Heart right ventricle (tissue), 16 donors: ENCODE measurements at regions of chr22 and their contacts with region 1.

Region 1: DNA sequence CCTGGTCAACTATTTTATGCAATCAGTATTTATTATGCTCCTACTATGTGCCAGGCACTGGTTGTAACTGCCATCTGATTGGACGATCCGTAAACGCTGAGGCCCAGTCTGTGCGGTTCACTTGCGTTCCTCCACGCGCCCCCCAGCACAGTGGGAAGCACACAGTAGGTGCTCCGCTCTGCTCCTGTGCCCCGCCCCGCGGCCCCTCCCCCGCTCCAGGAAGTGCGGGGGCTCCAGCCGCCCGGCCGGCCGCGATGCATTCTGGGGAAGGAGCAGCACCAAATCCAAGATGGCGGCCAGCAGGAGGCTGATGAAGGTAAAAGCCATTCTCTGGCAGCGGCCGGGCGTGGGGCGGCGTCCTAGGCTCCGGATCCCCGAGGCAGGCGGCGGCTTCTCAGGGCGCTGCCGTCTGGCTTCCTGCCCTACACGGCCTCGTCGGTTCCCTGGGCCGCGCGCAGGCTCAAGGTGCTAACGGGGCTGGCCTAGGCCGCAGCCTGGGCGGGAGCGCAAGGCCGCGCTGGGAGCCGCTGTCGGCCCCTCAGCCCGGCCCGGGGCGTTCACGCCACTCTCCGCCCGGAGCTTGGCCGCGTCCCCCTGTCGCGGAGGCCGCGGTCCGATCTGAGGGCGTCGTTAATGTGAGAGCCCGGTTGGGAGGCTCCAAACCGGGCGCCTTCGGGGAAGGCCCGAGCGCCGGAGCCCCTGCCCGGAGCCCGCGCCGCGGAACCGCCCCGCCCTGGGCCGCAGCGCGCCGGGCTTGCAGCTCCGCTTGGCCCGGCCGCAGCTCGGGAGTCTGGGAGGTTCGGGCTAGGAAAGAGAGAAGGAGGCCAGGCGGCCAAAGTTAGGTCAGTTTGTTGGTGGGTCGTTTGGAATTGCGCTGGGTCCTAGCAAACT is at the start of gene UBE2L3:
- DNase-seq: peak; percentile 86 to 88
- ATAC-seq: peak; percentile 94 to 97 (median 96)
- H3K4me3 ChIP-seq: peak within 1 kb of the TSS; percentile 67 to 96 (median 88)
- H3K27ac ChIP-seq: peak within 1 kb of the TSS; percentile 81 to 99 (median 94)
- H3K4me1 ChIP-seq: peaks cover 26 to 45% (median 40%) of the 10 kb centered on the region in 9 donors
- H3K27me3 ChIP-seq: no peaks in the 10 kb centered on the region
- CTCF ChIP-seq: no peak
- total RNA-seq, gene UBE2L3: 43.1 to 61.3 (median 49.5) TPM

Region 2: DNA sequence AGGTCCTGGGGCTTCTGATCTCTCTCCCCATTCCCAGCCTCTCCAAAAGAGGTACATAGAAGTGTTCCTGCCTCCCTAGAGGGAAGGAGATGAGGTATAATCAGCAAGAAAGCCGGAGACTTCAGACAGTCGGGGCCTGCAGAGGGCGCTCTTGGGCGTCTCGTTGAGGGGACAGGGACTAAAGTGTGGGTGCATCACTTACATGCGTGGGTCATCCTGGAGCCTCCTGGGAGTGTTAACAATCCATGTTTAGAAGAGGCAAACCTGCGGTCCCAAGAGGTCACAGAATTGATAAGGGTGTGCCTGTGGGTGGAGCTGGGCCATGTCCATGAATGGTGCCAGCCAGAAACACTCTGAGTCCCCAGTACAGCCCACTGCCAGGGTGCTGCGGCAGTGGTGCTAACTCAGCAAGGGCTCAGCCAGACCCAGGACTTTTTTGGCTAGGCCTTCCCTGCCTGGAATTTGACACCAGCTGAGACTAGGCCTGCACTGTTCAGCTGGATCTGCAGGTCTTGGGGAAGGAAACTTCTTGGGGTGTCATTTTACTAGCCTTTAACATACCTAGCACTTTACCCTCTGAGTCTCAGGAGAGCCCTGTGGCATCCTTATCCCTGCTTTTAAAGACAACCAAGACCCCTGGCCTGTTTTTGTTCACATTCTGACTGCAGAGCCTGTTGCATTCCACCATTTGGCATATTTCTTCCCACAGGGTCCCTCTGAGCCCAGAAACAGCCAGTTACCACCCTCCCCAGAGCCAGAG is 56.6 kb after region 1 on chr22:
- intact Hi-C with region 1: loop called in 4 of 10 experiments (anchors 5 to 10 kb)
- DNase-seq: peak in 1 of 2 donors; percentile 41
- ATAC-seq: peak in 7 of 8 donors; percentile 29 to 74 (median 52)
- H3K4me3 ChIP-seq: no peak overlapping the region
- H3K27ac ChIP-seq: peak overlapping the region in 4 of 10 donors; percentile 1 to 52 (median 32)
- H3K4me1 ChIP-seq: peaks cover 0 to 64% (median 54%) of the 10 kb centered on the region in 9 donors
- H3K27me3 ChIP-seq: no peaks in the 10 kb centered on the region
- CTCF ChIP-seq: peak in 7 of 9 donors; percentile 10 to 48 (median 41)

Region 3: GRCh38 chr22:21982338-21982965 is 414.8 kb after region 1 on chr22 and contains the start of gene TOP3B:
- intact Hi-C with region 1: no loop called
- DNase-seq: peak; percentile 78 to 85
- ATAC-seq: peak; percentile 83 to 93 (median 90)
- H3K4me3 ChIP-seq: peak within 1 kb of the TSS; percentile 58 to 100 (median 96)
- H3K27ac ChIP-seq: peak within 1 kb of the TSS; percentile 49 to 94 (median 88)
- H3K4me1 ChIP-seq: peaks cover 0 to 22% (median 17%) of the 10 kb centered on the region in 9 donors
- H3K27me3 ChIP-seq: no peaks in the 10 kb centered on the region
- CTCF ChIP-seq: no peak
- total RNA-seq, gene TOP3B: 8.4 to 18.4 (median 10.8) TPM

Region 4: DNA sequence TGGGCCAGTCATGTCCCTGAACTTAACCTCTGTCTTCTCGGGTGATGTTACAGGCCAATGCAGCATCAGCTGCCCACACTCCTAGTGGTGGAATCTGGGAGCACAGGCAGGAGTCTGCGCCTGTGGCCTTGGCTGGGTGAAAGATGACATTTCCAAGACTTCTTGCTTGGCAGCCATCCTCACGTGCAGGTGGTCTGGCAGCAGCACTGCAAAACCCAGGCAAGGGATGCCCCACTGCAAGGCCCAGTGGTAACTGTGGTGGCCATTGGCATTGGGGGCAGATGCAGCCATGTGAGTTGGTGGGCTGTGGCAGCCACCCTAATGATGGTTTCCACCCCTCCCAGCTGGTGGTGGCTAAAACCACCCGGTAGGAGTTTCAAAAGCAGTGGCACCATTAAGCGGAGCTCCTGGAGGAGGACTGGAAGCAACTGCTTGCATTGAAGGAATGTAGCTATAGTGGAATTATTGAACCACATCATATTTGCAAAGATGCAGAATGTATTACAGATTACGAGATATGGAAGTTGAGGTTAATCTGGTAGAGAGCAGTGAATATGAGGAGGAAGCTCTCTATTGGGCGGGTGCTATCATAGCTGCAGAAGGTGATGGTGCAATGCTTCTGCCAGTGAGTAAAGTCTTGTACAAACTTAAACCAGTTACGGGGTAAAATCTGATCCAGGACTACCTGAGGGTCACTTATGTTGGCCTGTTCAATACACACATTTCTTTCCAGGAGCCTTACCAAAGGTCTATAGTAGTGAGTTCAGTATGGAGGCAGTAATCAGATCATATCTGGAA is 535.6 kb after region 1 on chr22:
- intact Hi-C with region 1: no loop called
- DNase-seq: no peak
- ATAC-seq: no peak
- H3K4me3 ChIP-seq: no peak overlapping the region
- H3K27ac ChIP-seq: no peak overlapping the region
- H3K4me1 ChIP-seq: no peaks in the 10 kb centered on the region
- H3K27me3 ChIP-seq: peaks cover 0 to 10% (median 0%) of the 10 kb centered on the region in 7 donors
- CTCF ChIP-seq: peak in 3 of 9 donors; percentile 10 to 39 (median 10)